ENCODE measurements at regions of chr1 and their contacts with region 1.

Region 1: GRCh38 chr1:192159014-192159413 is 752 bp downstream of the RGS18 start:
- DNase-seq: peak in 2 of 3 donors; percentile 47 to 53
- H3K4me3 ChIP-seq: peak overlapping the region in 6 of 7 experiments; percentile 26 to 79 (median 70)
- H3K27ac ChIP-seq: peak overlapping the region; percentile 59 to 86
- H3K4me1 ChIP-seq: peaks cover 15 to 57% (median 31%) of the 10 kb centered on the region in 4 experiments
- H3K27me3 ChIP-seq: no peaks in the 10 kb centered on the region

Region 2: DNA sequence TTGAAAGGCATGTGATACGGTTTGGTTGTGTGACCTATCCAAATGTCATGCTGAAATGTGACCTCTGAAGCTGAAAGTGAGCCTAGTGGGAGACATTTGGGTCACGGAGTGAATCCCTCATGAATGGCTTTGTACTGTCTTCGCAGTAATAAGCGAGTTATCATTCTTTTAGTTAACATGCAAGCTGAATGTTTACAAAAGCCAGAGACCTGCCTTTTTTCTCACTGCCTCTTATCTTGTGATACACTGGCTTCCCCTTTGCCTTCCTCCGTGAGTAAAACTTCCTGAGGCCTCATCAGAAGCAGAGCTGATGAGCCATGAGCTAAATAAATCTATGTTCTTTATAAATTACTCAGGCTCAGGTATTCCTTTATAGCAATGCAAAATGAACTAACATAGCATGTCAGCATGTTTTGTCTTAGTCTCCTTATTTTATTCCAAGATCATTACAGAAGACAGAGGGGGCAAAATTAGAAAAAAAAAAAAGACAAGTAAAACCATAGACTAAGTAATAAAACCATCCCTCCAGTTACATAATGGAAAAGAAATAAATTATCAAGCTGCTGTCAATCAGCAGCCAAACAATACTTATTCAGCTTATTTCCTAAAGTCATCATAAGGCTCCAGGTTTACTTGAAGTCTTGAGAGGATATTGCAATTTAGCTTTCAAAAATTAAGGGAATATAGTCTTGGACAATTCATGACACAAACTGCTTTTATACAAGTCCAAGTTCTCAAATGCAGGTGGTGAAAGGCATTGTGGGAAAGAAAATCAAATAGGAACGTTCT is 11.4 kb after region 1 on chr1:
- CTCF ChIA-PET with region 1: interaction called, 13 read pairs
- POLR2A ChIA-PET with region 1: interaction called, 4 read pairs
- DNase-seq: peak; percentile 78 to 92 (median 83)
- H3K4me3 ChIP-seq: peak overlapping the region in 4 of 7 experiments; percentile 19 to 59 (median 35)
- H3K27ac ChIP-seq: peak overlapping the region; percentile 83 to 91
- H3K4me1 ChIP-seq: peaks cover 29 to 61% (median 45%) of the 10 kb centered on the region in 4 experiments
- H3K27me3 ChIP-seq: no peaks in the 10 kb centered on the region